SK-N-SH (cell line): ENCODE measurements at regions of chr1 and their contacts with region 1.

Region 1: DNA sequence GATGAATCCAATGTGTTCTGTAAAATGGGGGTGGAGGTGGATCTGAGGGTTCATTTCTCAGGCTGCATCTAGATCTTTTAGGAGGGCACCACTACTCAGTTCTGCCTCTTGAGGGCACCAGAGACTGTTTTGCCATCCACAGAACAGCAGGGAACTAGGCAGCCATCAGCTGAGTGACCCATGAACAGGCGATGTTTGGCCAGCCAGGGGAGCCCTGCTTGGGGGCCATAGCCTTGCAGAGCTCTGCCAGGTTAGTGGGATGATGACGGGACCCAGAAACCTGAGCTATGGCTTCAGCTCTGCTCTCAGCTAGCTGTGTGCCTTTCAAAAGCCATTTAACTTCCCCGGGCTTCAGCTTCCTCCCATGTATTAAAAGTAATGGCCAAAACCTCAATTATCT is 13.4 kb upstream of the NOS1AP start:
- DNase-seq: peak; percentile 69
- H3K4me3 ChIP-seq: peak overlapping the region in 1 of 2 experiments; percentile 33; a peak in 1 of 4 replicates
- H3K27ac ChIP-seq: no peak overlapping the region
- H3K4me1 ChIP-seq: peaks cover 0 to 10% of the 10 kb centered on the region in 2 experiments; a peak in 1 of 4 replicates
- H3K27me3 ChIP-seq: no peaks in the 10 kb centered on the region; the same call in 1 of the 2 replicates
- CTCF ChIP-seq: peak; percentile 90
- EP300 ChIP-seq: no peak
- RAD21 ChIP-seq: peak; percentile 99

Region 2: DNA sequence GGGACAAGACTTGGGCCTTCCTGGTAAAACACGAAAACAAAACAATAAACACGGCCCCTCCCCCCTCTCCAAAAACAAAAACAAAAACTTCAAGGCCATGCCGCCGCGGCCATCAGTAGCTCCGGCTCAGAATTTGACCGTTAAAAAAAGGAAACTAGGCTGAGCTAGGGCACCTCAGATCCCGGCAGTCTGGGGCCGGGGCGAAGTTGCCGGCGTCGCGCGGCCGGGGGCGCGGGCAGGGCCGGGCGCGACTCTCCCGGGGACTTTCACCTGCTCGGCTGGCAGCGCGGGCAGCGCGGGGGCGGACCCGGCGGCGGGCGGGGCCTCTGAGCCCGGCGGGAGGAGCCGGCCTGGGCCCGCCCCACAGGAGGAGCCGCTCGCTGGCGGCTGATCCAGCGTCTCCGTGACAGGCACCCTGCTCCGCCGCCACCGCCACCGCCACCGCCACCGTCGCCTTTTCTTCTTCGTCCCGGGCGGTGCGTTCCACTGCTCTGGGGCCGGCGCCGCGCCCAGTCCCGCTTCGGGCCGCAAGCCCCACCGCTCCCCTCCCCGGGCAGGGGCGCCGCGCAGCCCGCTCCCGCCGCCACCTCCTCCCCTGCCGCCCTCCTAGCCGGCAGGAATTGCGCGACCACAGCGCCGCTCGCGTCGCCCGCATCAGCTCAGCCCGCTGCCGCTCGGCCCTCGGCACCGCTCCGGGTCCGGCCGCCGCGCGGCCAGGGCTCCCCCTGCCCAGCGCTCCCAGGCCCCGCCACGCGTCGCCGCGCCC is 13.5 kb after region 1 on chr1 and contains the start of gene NOS1AP:
- CTCF ChIA-PET with region 1: interaction called, 11 read pairs
- POLR2A ChIA-PET with region 1: no interaction called
- DNase-seq: peak; percentile 95
- H3K4me3 ChIP-seq: peak within 1 kb of the TSS; percentile 73 to 86
- H3K27ac ChIP-seq: peak within 1 kb of the TSS in 1 of 2 experiments; percentile 22; a peak in 1 of 4 replicates
- H3K4me1 ChIP-seq: peaks cover 0 to 15% of the 10 kb centered on the region in 2 experiments; a peak in 2 of 4 replicates
- H3K27me3 ChIP-seq: peaks cover 32% of the 10 kb centered on the region
- CTCF ChIP-seq: no peak
- EP300 ChIP-seq: no peak
- RAD21 ChIP-seq: no peak
- polyA plus RNA-seq, gene NOS1AP: 0.03 TPM in 2 replicates

Region 3: GRCh38 chr1:162265983-162266382 is 209.9 kb after region 1 on chr1:
- CTCF ChIA-PET with region 1: interaction called, 18 read pairs
- POLR2A ChIA-PET with region 1: no interaction called
- DNase-seq: no peak
- H3K4me3 ChIP-seq: no peak overlapping the region
- H3K27ac ChIP-seq: no peak overlapping the region
- H3K4me1 ChIP-seq: no peaks in the 10 kb centered on the region; a peak in 1 of 4 replicates
- H3K27me3 ChIP-seq: peaks cover 4% of the 10 kb centered on the region; the same call in 1 of the 2 replicates
- CTCF ChIP-seq: no peak
- EP300 ChIP-seq: no peak
- RAD21 ChIP-seq: no peak

Region 4: GRCh38 chr1:162373541-162374375 is 317.7 kb after region 1 on chr1:
- CTCF ChIA-PET with region 1: interaction called, 13 read pairs
- POLR2A ChIA-PET with region 1: no interaction called
- DNase-seq: no peak
- H3K4me3 ChIP-seq: no peak overlapping the region
- H3K27ac ChIP-seq: peak overlapping the region in 1 of 2 experiments; percentile 77; a peak in 1 of 4 replicates
- H3K4me1 ChIP-seq: peaks cover 0 to 25% of the 10 kb centered on the region in 2 experiments; a peak in 1 of 4 replicates
- H3K27me3 ChIP-seq: no peaks in the 10 kb centered on the region; the same call in 1 of the 2 replicates
- CTCF ChIP-seq: no peak
- EP300 ChIP-seq: no peak
- RAD21 ChIP-seq: no peak

Region 5: GRCh38 chr1:162391790-162392563 is 335.9 kb after region 1 on chr1:
- CTCF ChIA-PET with region 1: interaction called, 55 read pairs
- POLR2A ChIA-PET with region 1: no interaction called
- DNase-seq: peak; percentile 54
- H3K4me3 ChIP-seq: no peak overlapping the region
- H3K27ac ChIP-seq: no peak overlapping the region
- H3K4me1 ChIP-seq: peaks cover 0 to 19% of the 10 kb centered on the region in 2 experiments; a peak in 1 of 4 replicates
- H3K27me3 ChIP-seq: peaks cover 4% of the 10 kb centered on the region; the same call in 1 of the 2 replicates
- CTCF ChIP-seq: peak; percentile 80
- EP300 ChIP-seq: no peak
- RAD21 ChIP-seq: peak; percentile 87